ENCODE measurements at regions of chr11 and their contacts with region 1.

Region 1: GRCh38 chr11:123246749-123247495 is 51.9 kb upstream of the CLMP start:
- DNase-seq: peak; percentile 72 to 90
- ATAC-seq: peak; percentile 85 to 97 (median 95)
- H3K4me3 ChIP-seq: no peak overlapping the region
- H3K4me3 Mint-ChIP-seq: no peak overlapping the region
- H3K27ac ChIP-seq: no peak overlapping the region
- H3K27ac Mint-ChIP-seq: no peak overlapping the region
- H3K4me1 ChIP-seq: no peaks in the 10 kb centered on the region
- H3K4me1 Mint-ChIP-seq: peaks cover 5 to 6% of the 10 kb centered on the region in 2 donors
- H3K27me3 ChIP-seq: peaks cover 2% of the 10 kb centered on the region
- H3K27me3 Mint-ChIP-seq: peaks cover 21 to 26% of the 10 kb centered on the region in 2 donors
- CTCF ChIP-seq: peak; percentile 98

Region 2: GRCh38 chr11:123103326-123103980 is 143.5 kb before region 1 on chr11:
- intact Hi-C with region 1: loop called (anchors 1 kb)
- DNase-seq: peak in 1 of 2 donors; percentile 71
- ATAC-seq: peak; percentile 37 to 66 (median 62)
- H3K4me3 ChIP-seq: no peak overlapping the region
- H3K4me3 Mint-ChIP-seq: no peak overlapping the region
- H3K27ac ChIP-seq: no peak overlapping the region
- H3K27ac Mint-ChIP-seq: peak overlapping the region in 1 of 2 donors; percentile 18
- H3K4me1 ChIP-seq: no peaks in the 10 kb centered on the region
- H3K4me1 Mint-ChIP-seq: peaks cover 0 to 7% of the 10 kb centered on the region in 2 donors
- H3K27me3 ChIP-seq: no peaks in the 10 kb centered on the region
- H3K27me3 Mint-ChIP-seq: no peaks in the 10 kb centered on the region
- CTCF ChIP-seq: peak; percentile 57

Region 3: GRCh38 chr11:123110356-123110755 is 136.6 kb before region 1 on chr11:
- intact Hi-C with region 1: loop called (anchors 1 kb)
- DNase-seq: peak in 1 of 2 donors; percentile 34
- ATAC-seq: peak in 2 of 3 donors; percentile 46 to 56
- H3K4me3 ChIP-seq: no peak overlapping the region
- H3K4me3 Mint-ChIP-seq: peak overlapping the region; percentile 47
- H3K27ac ChIP-seq: no peak overlapping the region
- H3K27ac Mint-ChIP-seq: peak overlapping the region in 1 of 2 donors; percentile 6
- H3K4me1 ChIP-seq: peaks cover 3% of the 10 kb centered on the region
- H3K4me1 Mint-ChIP-seq: peaks cover 6% of the 10 kb centered on the region in 2 donors
- H3K27me3 ChIP-seq: no peaks in the 10 kb centered on the region
- H3K27me3 Mint-ChIP-seq: no peaks in the 10 kb centered on the region
- CTCF ChIP-seq: no peak

Region 4: GRCh38 chr11:123166071-123166559 is 80.8 kb before region 1 on chr11:
- intact Hi-C with region 1: loop called (anchors 5 kb)
- DNase-seq: peak in 1 of 2 donors; percentile 21
- ATAC-seq: no peak
- H3K4me3 ChIP-seq: no peak overlapping the region
- H3K4me3 Mint-ChIP-seq: no peak overlapping the region
- H3K27ac ChIP-seq: no peak overlapping the region
- H3K27ac Mint-ChIP-seq: no peak overlapping the region
- H3K4me1 ChIP-seq: no peaks in the 10 kb centered on the region
- H3K4me1 Mint-ChIP-seq: no peaks in the 10 kb centered on the region
- H3K27me3 ChIP-seq: no peaks in the 10 kb centered on the region
- H3K27me3 Mint-ChIP-seq: peaks cover 5 to 8% of the 10 kb centered on the region in 2 donors
- CTCF ChIP-seq: peak; percentile 31

Region 5: GRCh38 chr11:123298488-123299447 is 51.8 kb after region 1 on chr11:
- intact Hi-C with region 1: no loop called
- DNase-seq: no peak
- ATAC-seq: no peak
- H3K4me3 ChIP-seq: no peak overlapping the region
- H3K4me3 Mint-ChIP-seq: no peak overlapping the region
- H3K27ac ChIP-seq: no peak overlapping the region
- H3K27ac Mint-ChIP-seq: no peak overlapping the region
- H3K4me1 ChIP-seq: peaks cover 18% of the 10 kb centered on the region
- H3K4me1 Mint-ChIP-seq: peaks cover 9 to 15% of the 10 kb centered on the region in 2 donors
- H3K27me3 ChIP-seq: peaks cover 3% of the 10 kb centered on the region
- H3K27me3 Mint-ChIP-seq: peaks cover 6 to 17% of the 10 kb centered on the region in 2 donors
- CTCF ChIP-seq: no peak

Region 6: DNA sequence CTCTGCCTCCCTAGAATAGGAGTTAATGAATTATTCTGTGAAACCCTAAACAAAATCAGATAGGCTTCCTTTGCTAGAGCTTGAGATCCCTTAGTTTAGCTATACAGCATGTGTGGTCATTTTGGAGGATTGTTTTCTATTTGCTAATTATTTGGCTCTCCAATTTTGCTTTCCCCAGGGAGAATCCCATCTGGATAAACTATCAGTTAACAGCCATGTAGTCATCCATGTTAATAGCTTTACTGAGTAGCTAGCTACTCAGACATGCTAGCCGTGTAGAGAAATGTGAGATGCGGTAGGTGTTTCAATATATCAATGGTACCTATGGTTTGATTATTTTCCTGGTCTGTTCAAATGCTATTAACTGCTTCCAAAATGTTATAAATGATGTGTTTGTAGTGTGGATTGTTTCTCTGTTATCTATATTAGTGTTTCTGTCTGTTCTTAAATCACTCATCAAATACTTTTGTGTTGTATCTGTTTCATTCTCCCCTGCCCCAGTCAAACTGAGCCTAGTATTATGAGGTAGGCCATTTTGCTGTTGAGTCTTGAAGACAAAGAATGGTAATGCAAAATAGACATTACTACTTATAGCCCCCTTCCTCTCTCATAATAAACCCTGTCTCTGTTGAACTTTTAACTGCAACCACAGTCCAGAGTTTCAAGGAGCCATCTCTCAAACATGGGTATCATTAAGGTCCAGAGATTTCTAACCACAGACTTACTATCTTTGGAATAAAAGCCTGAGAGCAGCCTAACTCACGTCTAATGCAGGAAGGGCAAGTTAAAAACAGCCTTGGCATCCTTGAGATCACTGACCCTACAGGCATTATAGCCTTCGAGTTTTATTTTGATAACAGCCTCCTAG is 127.1 kb after region 1 on chr11:
- intact Hi-C with region 1: no loop called
- DNase-seq: no peak
- ATAC-seq: no peak
- H3K4me3 ChIP-seq: no peak overlapping the region
- H3K4me3 Mint-ChIP-seq: no peak overlapping the region
- H3K27ac ChIP-seq: no peak overlapping the region
- H3K27ac Mint-ChIP-seq: no peak overlapping the region
- H3K4me1 ChIP-seq: no peaks in the 10 kb centered on the region
- H3K4me1 Mint-ChIP-seq: peaks cover 0 to 7% of the 10 kb centered on the region in 2 donors
- H3K27me3 ChIP-seq: no peaks in the 10 kb centered on the region
- H3K27me3 Mint-ChIP-seq: peaks cover 0 to 6% of the 10 kb centered on the region in 2 donors
- CTCF ChIP-seq: no peak

Region 7: GRCh38 chr11:123429913-123430720 is 183.2 kb after region 1 on chr11 and contains the start of gene GRAMD1B:
- intact Hi-C with region 1: no loop called
- DNase-seq: peak; percentile 50 to 85
- ATAC-seq: peak; percentile 75 to 83 (median 75)
- H3K4me3 ChIP-seq: peak within 1 kb of the TSS; percentile 53
- H3K4me3 Mint-ChIP-seq: peak within 1 kb of the TSS; percentile 93
- H3K27ac ChIP-seq: peak within 1 kb of the TSS; percentile 69
- H3K27ac Mint-ChIP-seq: peak within 1 kb of the TSS; percentile 26 to 80
- H3K4me1 ChIP-seq: peaks cover 20% of the 10 kb centered on the region
- H3K4me1 Mint-ChIP-seq: peaks cover 10 to 25% of the 10 kb centered on the region in 2 donors
- H3K27me3 ChIP-seq: no peaks in the 10 kb centered on the region
- H3K27me3 Mint-ChIP-seq: peaks cover 0 to 17% of the 10 kb centered on the region in 2 donors
- CTCF ChIP-seq: no peak
- total RNA-seq, gene GRAMD1B: 5.9 to 10.3 (median 8.8) TPM